ENCODE measurements at regions of chr7 and their contacts with region 1.

Region 1: GRCh38 chr7:90629297-90629918 is 33.3 kb downstream of the CDK14 start:
- DNase-seq: peak; percentile 77
- H3K4me3 Mint-ChIP-seq: no peak overlapping the region
- H3K27ac Mint-ChIP-seq: no peak overlapping the region
- H3K4me1 Mint-ChIP-seq: peaks cover 21% of the 10 kb centered on the region
- H3K27me3 Mint-ChIP-seq: no peaks in the 10 kb centered on the region
- CTCF ChIP-seq: peak; percentile 51

Region 2: GRCh38 chr7:90532231-90532929 is 97.0 kb before region 1 on chr7:
- CTCF ChIA-PET with region 1: interaction called, 22 read pairs
- POLR2A ChIA-PET with region 1: no interaction called
- intact Hi-C with region 1: no loop called
- DNase-seq: no peak
- H3K4me3 Mint-ChIP-seq: no peak overlapping the region
- H3K27ac Mint-ChIP-seq: no peak overlapping the region
- H3K4me1 Mint-ChIP-seq: peaks cover 10% of the 10 kb centered on the region
- H3K27me3 Mint-ChIP-seq: no peaks in the 10 kb centered on the region
- CTCF ChIP-seq: no peak

Region 3: GRCh38 chr7:90563286-90563685 is 66.1 kb before region 1 on chr7:
- CTCF ChIA-PET with region 1: interaction called, 16 read pairs
- POLR2A ChIA-PET with region 1: no interaction called
- intact Hi-C with region 1: no loop called
- DNase-seq: no peak
- H3K4me3 Mint-ChIP-seq: no peak overlapping the region
- H3K27ac Mint-ChIP-seq: no peak overlapping the region
- H3K4me1 Mint-ChIP-seq: peaks cover 11% of the 10 kb centered on the region
- H3K27me3 Mint-ChIP-seq: no peaks in the 10 kb centered on the region
- CTCF ChIP-seq: no peak

Region 4: GRCh38 chr7:90595801-90596671 is 33.4 kb before region 1 on chr7 and contains the start of gene CDK14:
- CTCF ChIA-PET with region 1: interaction called, 61 read pairs
- POLR2A ChIA-PET with region 1: interaction called, 76 read pairs
- intact Hi-C with region 1: loop called (anchors 1 kb)
- DNase-seq: peak; percentile 75
- H3K4me3 Mint-ChIP-seq: peak within 1 kb of the TSS; percentile 94
- H3K27ac Mint-ChIP-seq: peak within 1 kb of the TSS; percentile 73
- H3K4me1 Mint-ChIP-seq: peaks cover 57% of the 10 kb centered on the region
- H3K27me3 Mint-ChIP-seq: no peaks in the 10 kb centered on the region
- CTCF ChIP-seq: peak; percentile 50
- total RNA-seq, gene CDK14: 21.2 and 32.0 TPM in 2 replicates

Region 5: DNA sequence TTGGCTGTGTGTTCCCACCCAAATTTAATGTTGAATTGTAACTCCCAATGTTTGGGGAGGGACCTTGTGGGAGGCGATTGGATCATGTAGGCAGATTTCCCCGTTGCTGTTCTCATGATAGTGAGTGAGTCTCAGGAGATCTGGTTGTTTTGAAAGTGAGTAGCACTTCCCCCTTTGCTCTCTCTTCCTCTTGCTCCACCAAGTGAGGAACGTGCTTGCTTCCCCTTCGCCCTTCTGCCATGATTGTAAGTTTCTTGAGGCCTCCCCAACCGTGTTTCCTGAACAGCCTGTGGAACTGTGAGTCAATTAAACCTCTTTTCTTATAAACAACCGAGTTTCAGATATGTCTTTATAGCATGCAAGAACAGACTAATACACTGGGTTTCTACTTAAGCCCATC is 143.0 kb after region 1 on chr7:
- CTCF ChIA-PET with region 1: no interaction called
- POLR2A ChIA-PET with region 1: no interaction called
- intact Hi-C with region 1: no loop called
- DNase-seq: no peak
- H3K4me3 Mint-ChIP-seq: no peak overlapping the region
- H3K27ac Mint-ChIP-seq: no peak overlapping the region
- H3K4me1 Mint-ChIP-seq: peaks cover 20% of the 10 kb centered on the region
- H3K27me3 Mint-ChIP-seq: no peaks in the 10 kb centered on the region
- CTCF ChIP-seq: no peak

Region 6: GRCh38 chr7:91034459-91035368 is 405.3 kb after region 1 on chr7:
- CTCF ChIA-PET with region 1: interaction called, 19 read pairs
- POLR2A ChIA-PET with region 1: interaction called, 3 read pairs
- intact Hi-C with region 1: loop called (anchors 1 kb)
- DNase-seq: peak; percentile 57
- H3K4me3 Mint-ChIP-seq: no peak overlapping the region
- H3K27ac Mint-ChIP-seq: no peak overlapping the region
- H3K4me1 Mint-ChIP-seq: no peaks in the 10 kb centered on the region
- H3K27me3 Mint-ChIP-seq: no peaks in the 10 kb centered on the region
- CTCF ChIP-seq: peak; percentile 72